ENCODE measurements at regions of chr17 and their contacts with region 1.

Region 1: GRCh38 chr17:2656283-2656682 is 55.3 kb downstream of the CLUH start:
- DNase-seq: no peak
- H3K4me3 ChIP-seq: no peak overlapping the region
- H3K27ac ChIP-seq: no peak overlapping the region
- H3K4me1 ChIP-seq: no peaks in the 10 kb centered on the region
- H3K27me3 ChIP-seq: no peaks in the 10 kb centered on the region
- CTCF ChIP-seq: no peak

Region 2: DNA sequence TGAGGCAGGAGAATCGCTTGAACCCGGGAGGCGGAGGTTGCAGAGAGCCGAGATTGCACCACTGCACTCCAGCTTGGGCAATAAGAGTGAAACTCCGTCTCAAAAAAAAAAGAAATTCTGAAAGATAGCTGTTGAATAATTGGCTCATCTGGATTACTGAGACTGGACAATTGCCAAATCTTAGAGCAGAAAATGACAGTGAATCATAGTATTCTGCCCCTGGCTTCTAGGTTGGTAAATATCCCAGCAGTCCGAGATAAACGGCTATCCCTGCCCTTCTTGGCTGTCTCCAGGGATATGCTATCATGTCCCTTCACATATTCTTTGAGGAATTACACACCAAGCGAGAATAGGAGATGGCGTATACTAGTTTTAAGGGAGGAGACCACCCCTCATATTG is 109.1 kb before region 1 on chr17:
- intact Hi-C with region 1: no loop called
- DNase-seq: no peak
- H3K4me3 ChIP-seq: no peak overlapping the region
- H3K27ac ChIP-seq: no peak overlapping the region
- H3K4me1 ChIP-seq: no peaks in the 10 kb centered on the region
- H3K27me3 ChIP-seq: no peaks in the 10 kb centered on the region
- CTCF ChIP-seq: no peak

Region 3: DNA sequence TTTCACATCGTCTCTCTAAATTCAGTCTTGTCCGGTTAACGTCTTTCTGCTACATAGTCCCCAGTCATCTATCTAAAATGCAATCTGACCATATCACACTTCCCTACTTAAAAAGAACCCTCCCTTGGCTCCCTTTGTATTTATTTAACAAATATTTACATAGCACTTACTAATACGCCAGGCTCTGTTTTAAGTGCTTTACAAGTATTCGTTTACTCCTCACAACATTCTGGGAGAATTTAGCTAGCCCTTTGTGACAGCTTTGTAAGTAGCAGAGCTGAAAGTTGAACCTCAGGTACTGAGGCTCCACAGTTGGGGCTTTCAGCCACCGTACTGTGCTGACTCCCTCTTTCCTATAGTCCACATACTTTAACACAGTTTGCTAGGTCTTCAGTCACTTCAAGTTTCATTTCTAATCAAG is 53.7 kb before region 1 on chr17:
- intact Hi-C with region 1: loop called (anchors 10 kb)
- DNase-seq: no peak
- H3K4me3 ChIP-seq: no peak overlapping the region
- H3K27ac ChIP-seq: peak overlapping the region; percentile 5
- H3K4me1 ChIP-seq: peaks cover 11% of the 10 kb centered on the region
- H3K27me3 ChIP-seq: no peaks in the 10 kb centered on the region
- CTCF ChIP-seq: no peak

Measured in colonic mucosa (tissue), 4 donors.